Colonic mucosa (tissue), 4 donors: ENCODE measurements at regions of chr6 and their contacts with region 1.

Region 1: GRCh38 chr6:155327326-155328073 is 13.2 kb upstream of the TFB1M start:
- DNase-seq: peak; percentile 63
- H3K4me3 ChIP-seq: no peak overlapping the region
- H3K27ac ChIP-seq: no peak overlapping the region
- H3K4me1 ChIP-seq: no peaks in the 10 kb centered on the region
- H3K27me3 ChIP-seq: no peaks in the 10 kb centered on the region
- CTCF ChIP-seq: peak; percentile 64

Region 2: DNA sequence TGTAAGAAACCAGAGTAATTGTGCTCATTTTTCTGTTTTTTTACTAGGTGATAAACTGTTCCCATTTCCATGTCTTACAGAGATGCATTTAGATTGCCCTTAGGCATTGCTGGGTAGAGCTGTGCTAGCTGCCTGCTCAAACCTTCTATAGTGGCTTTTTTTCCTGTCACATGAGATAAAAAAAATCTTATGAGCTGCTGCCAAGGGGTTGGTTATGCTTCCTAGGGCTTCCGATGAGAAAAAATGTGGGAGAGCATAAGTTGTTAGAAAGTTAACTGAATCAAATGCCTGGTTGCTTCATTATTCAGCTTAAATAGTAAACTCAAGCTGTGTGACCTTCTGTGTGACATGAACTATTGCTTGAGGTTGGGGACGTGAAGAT is 178.1 kb after region 1 on chr6:
- intact Hi-C with region 1: no loop called
- DNase-seq: no peak
- H3K4me3 ChIP-seq: no peak overlapping the region
- H3K27ac ChIP-seq: no peak overlapping the region
- H3K4me1 ChIP-seq: no peaks in the 10 kb centered on the region
- H3K27me3 ChIP-seq: no peaks in the 10 kb centered on the region
- CTCF ChIP-seq: no peak

Region 3: GRCh38 chr6:155530219-155530834 is 202.8 kb after region 1 on chr6:
- intact Hi-C with region 1: loop called (anchors 5 kb)
- DNase-seq: no peak
- H3K4me3 ChIP-seq: no peak overlapping the region
- H3K27ac ChIP-seq: no peak overlapping the region
- H3K4me1 ChIP-seq: no peaks in the 10 kb centered on the region
- H3K27me3 ChIP-seq: no peaks in the 10 kb centered on the region
- CTCF ChIP-seq: peak; percentile 40

Region 4: DNA sequence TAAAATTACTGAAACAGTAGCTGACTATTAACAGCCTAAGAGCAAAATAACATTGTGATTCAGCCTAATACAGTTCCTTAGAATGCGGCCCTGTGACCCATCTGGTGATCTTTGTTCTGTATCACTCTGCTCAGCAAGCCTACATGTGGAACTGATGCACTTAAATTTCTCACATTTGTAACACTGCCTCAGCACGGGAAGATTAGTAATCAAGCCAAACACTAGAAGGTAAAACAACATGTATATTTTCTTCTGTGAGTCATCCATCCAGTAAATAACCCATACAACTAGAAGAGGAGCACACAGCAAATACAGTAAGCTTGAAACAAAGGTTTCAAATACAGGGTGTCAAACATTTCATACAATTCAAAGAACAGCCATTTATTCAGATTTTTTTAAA is 317.8 kb after region 1 on chr6:
- intact Hi-C with region 1: no loop called
- DNase-seq: no peak
- H3K4me3 ChIP-seq: no peak overlapping the region
- H3K27ac ChIP-seq: no peak overlapping the region
- H3K4me1 ChIP-seq: no peaks in the 10 kb centered on the region
- H3K27me3 ChIP-seq: no peaks in the 10 kb centered on the region
- CTCF ChIP-seq: no peak